Heart right ventricle (tissue), 16 donors: ENCODE measurements at regions of chr13 and their contacts with region 1.

Region 1: GRCh38 chr13:41345914-41346589 is 35.0 kb downstream of the NAA16 start:
- DNase-seq: no peak
- ATAC-seq: peak in 5 of 8 donors; percentile 27 to 74 (median 40)
- H3K4me3 ChIP-seq: no peak overlapping the region
- H3K27ac ChIP-seq: peak overlapping the region in 6 of 10 donors; percentile 0 to 36 (median 24)
- H3K4me1 ChIP-seq: peaks cover 0 to 16% (median 6%) of the 10 kb centered on the region in 9 donors
- H3K27me3 ChIP-seq: no peaks in the 10 kb centered on the region
- CTCF ChIP-seq: no peak

Region 2: GRCh38 chr13:42119875-42120274 is 773.8 kb after region 1 on chr13:
- intact Hi-C with region 1: loop called in 2 of 10 experiments (anchors 5 to 10 kb)
- DNase-seq: no peak
- ATAC-seq: peak in 1 of 8 donors; percentile 53
- H3K4me3 ChIP-seq: no peak overlapping the region
- H3K27ac ChIP-seq: no peak overlapping the region
- H3K4me1 ChIP-seq: peaks cover 0 to 31% (median 14%) of the 10 kb centered on the region in 9 donors
- H3K27me3 ChIP-seq: no peaks in the 10 kb centered on the region
- CTCF ChIP-seq: no peak